ENCODE measurements at regions of chr16 and their contacts with region 1.

Region 1: GRCh38 chr16:72467157-72467759 is 295.3 kb upstream of the PMFBP1 start:
- DNase-seq: peak; percentile 2 to 57
- ATAC-seq: peak; percentile 73 to 82; a peak in 5 of 6 replicates
- H3K4me3 ChIP-seq: no peak overlapping the region
- H3K27ac ChIP-seq: no peak overlapping the region
- H3K4me1 ChIP-seq: no peaks in the 10 kb centered on the region
- CTCF ChIP-seq: peak; percentile 78
- EP300 ChIP-seq: no peak
- POLR2A ChIP-seq: no peak
- RAD21 ChIP-seq: peak; percentile 81 to 83

Region 2: DNA sequence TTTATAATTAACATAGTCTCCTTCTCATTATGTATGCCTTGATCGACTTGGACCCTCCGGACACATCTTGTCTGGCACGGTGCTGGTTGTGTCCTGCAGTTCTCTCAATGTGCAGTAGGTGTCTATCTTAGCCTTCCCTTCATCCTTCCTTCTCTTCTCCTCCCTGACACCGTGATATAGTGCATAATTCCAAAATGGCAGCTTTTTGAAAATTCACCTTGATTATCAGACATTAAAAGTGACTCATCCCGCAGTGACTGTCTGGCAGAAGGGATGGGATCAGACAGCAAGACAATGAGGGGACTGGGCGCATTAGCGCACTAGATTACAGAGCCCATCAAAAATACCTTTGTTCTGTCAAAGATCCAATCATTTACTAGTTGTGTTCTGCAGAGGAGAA is 225.3 kb before region 1 on chr16:
- CTCF ChIA-PET with region 1: interaction called, 69 read pairs
- POLR2A ChIA-PET with region 1: no interaction called
- DNase-seq: peak; percentile 35 to 60
- ATAC-seq: peak; percentile 96 to 99
- H3K4me3 ChIP-seq: no peak overlapping the region
- H3K27ac ChIP-seq: peak overlapping the region in 1 of 2 experiments; percentile 32; a peak in 1 of 6 replicates
- H3K4me1 ChIP-seq: no peaks in the 10 kb centered on the region
- CTCF ChIP-seq: peak; percentile 85
- EP300 ChIP-seq: no peak
- POLR2A ChIP-seq: no peak
- RAD21 ChIP-seq: peak; percentile 91 to 93